Lower leg skin (tissue), 4 donors: ENCODE measurements at regions of chr22 and their contacts with region 1.

Region 1: DNA sequence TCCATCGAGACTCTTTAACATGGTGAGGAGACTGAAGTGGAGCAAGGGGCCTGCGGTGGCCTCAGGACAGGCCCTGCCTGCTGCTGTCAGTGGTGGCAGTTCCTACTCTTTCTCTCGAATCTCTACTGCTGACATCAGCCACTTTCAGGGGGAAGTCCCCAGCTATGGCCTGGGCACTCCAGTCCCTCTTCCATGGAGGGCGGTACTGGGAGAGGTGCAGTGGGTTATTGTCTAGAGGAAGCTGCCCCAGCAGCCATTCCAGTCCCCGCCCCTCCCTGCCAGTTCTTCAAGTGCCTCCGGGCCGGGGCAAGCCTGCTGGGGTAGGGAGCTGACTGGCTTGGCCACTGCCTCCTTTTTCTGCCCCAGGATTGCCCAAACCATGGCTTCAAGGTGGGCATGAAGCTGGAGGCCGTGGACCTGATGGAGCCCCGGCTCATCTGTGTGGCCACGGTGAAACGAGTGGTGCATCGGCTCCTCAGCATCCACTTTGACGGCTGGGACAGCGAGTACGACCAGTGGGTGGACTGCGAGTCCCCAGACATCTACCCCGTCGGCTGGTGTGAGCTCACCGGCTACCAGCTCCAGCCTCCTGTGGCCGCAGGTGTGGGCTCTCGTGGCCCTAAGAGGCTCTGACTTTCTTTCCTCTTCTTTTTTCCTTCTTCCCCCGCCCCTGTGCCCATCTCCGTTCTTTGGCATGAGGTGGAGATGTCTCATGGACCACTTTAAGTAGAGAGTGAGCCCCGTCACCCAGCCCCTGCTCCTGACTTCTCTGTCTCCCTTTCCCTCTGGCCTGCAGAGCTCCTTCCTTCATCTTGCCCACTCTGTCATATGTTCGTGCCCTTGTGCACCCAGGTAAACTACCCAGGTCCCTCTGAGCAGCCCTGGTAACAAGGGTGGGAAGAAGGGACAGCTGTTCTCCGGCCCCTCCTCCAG is 13.7 kb downstream of the CHADL start:
- DNase-seq: no peak
- H3K4me3 ChIP-seq: no peak overlapping the region
- CTCF ChIP-seq: no peak
- POLR2A ChIP-seq: no peak

Region 2: DNA sequence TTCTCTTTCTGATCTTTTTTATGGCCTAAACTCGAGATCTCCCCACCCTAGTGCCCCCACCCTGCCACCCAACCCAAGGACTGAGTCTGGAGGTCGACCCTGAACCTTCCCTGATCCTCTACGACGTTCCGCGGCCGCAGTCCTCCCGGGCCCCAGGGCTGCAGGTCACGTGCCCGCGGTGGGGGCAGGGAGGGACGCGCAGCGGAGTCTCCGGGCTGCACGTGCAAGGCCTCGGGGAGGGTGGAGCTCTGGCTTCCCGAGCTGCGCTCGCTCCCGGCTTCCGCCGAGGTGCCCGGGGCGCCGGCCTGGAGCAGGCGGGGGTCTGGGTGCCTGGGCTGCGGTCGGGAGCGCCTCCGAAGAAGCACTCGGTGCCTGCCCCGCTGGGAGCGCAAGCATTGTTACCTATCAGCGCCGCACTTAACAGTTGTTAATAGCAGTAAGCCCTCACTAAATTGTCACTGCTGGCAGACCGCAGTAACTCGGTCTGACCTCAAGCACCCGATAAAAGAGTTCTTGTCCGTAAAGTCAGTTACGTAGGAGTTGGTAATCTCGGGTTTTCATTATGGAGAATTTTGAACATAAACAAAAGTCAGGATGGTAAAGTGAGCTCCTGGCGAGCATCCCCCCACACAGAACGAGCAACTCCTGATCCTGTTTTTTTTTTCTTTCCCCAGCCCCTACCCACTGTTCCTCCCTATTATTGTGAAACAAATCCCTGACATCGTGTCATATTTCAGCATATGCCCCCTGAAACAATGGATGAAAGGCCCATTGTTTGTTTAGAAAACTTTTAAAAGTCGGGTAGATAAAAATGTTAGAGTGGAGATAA is 204.3 kb before region 1 on chr22:
- intact Hi-C with region 1: no loop called
- DNase-seq: peak; percentile 91 to 98
- H3K4me3 ChIP-seq: peak overlapping the region; percentile 62
- CTCF ChIP-seq: no peak
- POLR2A ChIP-seq: no peak

Region 3: DNA sequence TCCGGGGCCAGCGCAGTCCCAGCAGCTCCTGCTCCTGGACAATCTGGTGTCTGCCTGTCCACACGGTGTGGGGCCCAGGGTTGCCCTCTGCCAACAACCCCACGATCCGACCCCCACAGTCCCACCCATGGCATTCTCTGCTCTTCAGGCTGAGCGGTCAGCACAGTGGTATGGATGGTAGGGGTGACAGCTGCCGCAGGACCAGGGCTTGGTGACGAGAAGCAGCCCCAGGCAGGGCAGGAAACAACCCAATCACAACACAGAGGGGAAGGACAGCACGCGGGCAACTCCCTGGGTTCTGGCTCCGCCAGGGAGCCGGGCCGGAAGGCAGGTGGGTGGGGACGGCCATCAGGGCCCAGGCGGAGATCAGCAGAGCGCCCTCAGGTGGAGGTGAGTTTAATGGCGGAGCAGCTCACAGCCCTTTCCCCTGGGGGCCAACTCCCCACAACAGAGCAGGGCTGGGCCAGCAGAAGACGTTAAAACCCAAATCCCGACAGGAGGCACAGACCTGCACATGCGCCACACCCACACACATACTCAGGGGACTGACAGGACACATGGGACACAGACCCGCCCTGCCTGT is 19.0 kb after region 1 on chr22:
- intact Hi-C with region 1: loop called (anchors 2 kb)
- DNase-seq: no peak
- H3K4me3 ChIP-seq: no peak overlapping the region
- CTCF ChIP-seq: no peak
- POLR2A ChIP-seq: no peak